ENCODE measurements at regions of chr3 and their contacts with region 1.

Region 1: DNA sequence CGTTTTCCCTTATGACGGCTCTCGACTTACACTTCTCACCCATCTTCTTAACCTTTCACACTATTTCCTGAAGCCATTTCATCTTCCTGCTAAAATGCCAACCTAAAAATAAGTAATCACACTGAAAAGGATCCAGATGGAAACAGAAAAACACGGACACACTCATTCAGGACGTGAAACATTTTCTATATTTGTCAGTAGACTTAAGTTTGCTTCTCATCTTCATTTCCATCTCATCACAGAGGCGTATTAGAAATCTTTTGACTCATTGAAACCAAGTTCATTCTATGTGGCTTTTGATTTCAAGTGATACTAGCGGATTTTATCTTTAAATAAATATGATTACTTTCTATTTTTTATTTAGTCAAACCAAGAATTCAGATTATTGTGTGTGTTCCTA is 27.4 kb upstream of the DLG1 start:
- DNase-seq: no peak
- ATAC-seq: peak; percentile 74
- H3K4me3 Mint-ChIP-seq: no peak overlapping the region
- H3K27ac Mint-ChIP-seq: peak overlapping the region; percentile 2
- H3K4me1 Mint-ChIP-seq: peaks cover 8% of the 10 kb centered on the region
- H3K27me3 Mint-ChIP-seq: peaks cover 25% of the 10 kb centered on the region

Region 2: GRCh38 chr3:197114007-197114406 is 211.8 kb before region 1 on chr3:
- CTCF ChIA-PET with region 1: no interaction called
- POLR2A ChIA-PET with region 1: no interaction called
- intact Hi-C with region 1: no loop called
- DNase-seq: no peak
- ATAC-seq: no peak
- H3K4me3 Mint-ChIP-seq: no peak overlapping the region
- H3K27ac Mint-ChIP-seq: no peak overlapping the region
- H3K4me1 Mint-ChIP-seq: peaks cover 8% of the 10 kb centered on the region
- H3K27me3 Mint-ChIP-seq: no peaks in the 10 kb centered on the region

Region 3: DNA sequence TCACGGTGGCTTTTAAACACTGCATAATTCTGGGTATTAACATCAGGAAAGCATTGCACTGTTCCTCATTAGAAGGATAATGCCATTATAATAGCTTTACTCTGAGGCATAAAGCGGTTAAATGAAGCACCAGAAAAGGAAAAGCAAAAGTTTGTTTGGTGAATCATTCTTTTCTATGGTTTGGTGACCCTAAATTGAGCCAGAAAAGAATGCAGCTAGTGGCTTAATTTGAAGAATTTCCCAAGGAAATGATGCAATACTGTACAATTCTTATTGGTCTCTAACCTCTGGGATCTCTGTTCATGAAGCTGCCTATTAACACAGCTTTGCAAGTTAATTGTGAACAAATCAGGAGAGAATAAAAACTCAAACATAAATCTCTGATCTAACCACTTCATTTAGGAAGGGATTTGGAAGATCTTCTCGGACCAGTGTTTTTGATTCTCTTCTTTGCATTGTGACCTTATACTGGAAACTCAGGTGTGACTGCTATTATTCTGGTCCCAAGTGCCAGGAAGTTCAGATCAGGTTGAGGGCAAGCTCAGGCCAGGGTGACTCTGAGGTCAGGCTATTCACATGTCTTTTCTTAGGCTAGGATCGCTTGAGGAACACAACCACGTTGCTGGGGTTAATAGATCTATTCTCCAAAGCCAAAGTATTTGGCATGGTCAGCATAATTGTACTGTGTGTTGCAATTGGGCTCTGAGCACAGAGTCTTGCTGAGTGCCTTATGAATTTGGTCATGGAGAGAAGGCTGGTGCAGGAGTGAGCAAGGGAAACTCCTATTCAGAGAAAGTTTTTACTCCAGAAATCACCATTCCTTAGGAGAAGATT is 16.0 kb before region 1 on chr3:
- CTCF ChIA-PET with region 1: interaction called, 4 read pairs
- POLR2A ChIA-PET with region 1: no interaction called
- intact Hi-C with region 1: loop called in 1 of 2 experiments (anchors 1 kb)
- DNase-seq: no peak
- ATAC-seq: peak; percentile 45
- H3K4me3 Mint-ChIP-seq: peak overlapping the region; percentile 6
- H3K27ac Mint-ChIP-seq: peak overlapping the region; percentile 67
- H3K4me1 Mint-ChIP-seq: peaks cover 36% of the 10 kb centered on the region
- H3K27me3 Mint-ChIP-seq: peaks cover 13% of the 10 kb centered on the region

Region 4: GRCh38 chr3:197392961-197393360 is 67.2 kb after region 1 on chr3:
- CTCF ChIA-PET with region 1: no interaction called
- POLR2A ChIA-PET with region 1: no interaction called
- intact Hi-C with region 1: no loop called
- DNase-seq: no peak
- ATAC-seq: no peak
- H3K4me3 Mint-ChIP-seq: no peak overlapping the region
- H3K27ac Mint-ChIP-seq: no peak overlapping the region
- H3K4me1 Mint-ChIP-seq: peaks cover 11% of the 10 kb centered on the region
- H3K27me3 Mint-ChIP-seq: peaks cover 13% of the 10 kb centered on the region

Measured in activated CD4-positive, alpha-beta T cell treated with anti-CD3 and anti-CD28 coated beads for 36 hours (primary cell).